Activated CD4-positive, alpha-beta T cell treated with anti-CD3 and anti-CD28 coated beads, Interleukin-2, amount 10 ng/mL, durations not matched to agents 24 days and 14 days (primary cell): ENCODE measurements at regions of chr4 and their contacts with region 1.

Region 1: GRCh38 chr4:54091637-54092404 is 8.1 kb upstream of the GSX2 start:
- DNase-seq: peak; percentile 93
- H3K4me3 Mint-ChIP-seq: peak overlapping the region; percentile 87
- H3K27ac Mint-ChIP-seq: no peak overlapping the region
- H3K4me1 Mint-ChIP-seq: peaks cover 21% of the 10 kb centered on the region
- H3K27me3 Mint-ChIP-seq: peaks cover 77% of the 10 kb centered on the region

Region 2: DNA sequence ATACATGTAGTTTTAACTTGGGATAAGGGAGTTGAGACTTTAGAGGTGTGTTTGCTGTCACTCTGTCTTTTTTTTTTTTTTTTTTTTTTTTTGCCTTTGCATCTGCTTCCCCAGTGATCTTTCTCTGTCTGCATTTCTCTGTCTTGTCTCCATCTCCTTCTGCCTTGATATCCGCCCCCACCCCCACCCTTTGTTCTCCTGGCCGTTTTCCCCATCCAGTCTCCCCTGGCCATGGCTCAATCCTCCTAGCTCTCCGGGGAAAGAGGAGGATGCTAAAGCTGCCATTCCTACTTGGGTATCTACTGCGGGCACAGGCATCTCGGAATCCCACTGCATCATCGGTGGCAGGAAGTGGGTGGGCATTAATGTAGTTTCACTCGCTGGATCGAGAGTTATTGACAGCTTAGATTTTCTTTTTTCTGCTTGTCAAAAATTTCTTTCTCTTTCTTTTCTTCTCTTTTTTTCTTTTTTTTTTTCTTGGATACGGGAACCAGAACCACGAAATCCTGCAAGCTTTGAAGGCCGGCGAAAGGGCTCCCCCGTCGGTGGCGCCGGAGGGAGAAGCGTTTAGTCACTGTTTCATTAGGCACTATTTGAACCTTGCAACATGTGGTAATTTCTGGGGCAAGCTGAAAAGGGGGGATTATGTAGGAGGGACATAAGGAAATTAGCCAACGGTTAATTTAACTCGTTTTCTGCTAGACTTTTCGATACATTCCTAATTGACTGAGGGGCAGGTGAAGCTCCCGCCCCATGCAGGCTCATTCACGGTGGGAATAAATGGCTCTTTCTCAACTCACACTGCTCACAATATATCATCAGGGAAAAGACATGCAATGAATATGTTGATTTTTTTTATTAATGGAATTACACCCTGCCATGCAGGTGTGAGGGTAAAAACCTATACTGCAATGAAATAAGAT is 16.4 kb after region 1 on chr4:
- intact Hi-C with region 1: loop called (anchors 2 kb)
- DNase-seq: no peak
- H3K4me3 Mint-ChIP-seq: peak overlapping the region; percentile 34
- H3K27ac Mint-ChIP-seq: no peak overlapping the region
- H3K4me1 Mint-ChIP-seq: peaks cover 11% of the 10 kb centered on the region
- H3K27me3 Mint-ChIP-seq: peaks cover 74% of the 10 kb centered on the region